CD8-positive, alpha-beta T cell (primary cell): ENCODE measurements at regions of chr7 and their contacts with region 1.

Region 1: DNA sequence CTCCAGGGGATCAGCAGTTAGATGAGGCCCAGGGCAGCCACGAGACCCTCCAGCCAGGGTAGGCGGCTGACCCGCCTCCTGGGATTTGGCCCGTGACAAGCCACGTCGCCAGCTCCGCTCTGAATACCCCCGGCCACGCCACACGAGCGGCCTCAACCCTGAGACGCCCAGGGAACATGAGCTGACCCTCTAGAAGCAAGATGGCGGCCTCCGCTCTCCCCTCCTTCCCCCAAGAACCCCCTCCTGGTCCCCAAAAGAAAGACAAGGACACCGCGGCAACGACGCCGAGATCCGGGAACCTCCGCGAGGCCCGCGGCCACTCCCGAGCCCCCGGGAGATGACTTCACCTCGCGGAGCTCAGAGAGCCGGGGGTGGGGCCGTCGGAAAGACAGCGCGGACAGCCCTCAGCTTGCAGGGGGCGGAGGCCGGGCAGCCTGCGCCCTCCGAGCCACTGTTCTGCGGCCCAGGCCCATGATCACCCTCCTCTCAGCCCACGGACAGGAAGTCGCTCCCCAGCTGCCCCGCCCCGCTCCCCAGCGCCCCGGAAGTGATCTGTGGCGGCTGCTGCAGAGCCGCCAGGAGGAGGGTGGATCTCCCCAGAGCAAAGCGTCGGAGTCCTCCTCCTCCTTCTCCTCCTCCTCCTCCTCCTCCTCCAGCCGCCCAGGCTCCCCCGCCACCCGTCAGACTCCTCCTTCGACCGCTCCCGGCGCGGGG is at the start of gene RALA:
- DNase-seq: peak; percentile 75 to 93 (median 91)
- ATAC-seq: peak; percentile 86
- H3K4me3 ChIP-seq: peak within 1 kb of the TSS; percentile 77 to 85
- H3K4me3 Mint-ChIP-seq: peak within 1 kb of the TSS; percentile 97
- H3K27ac ChIP-seq: peak within 1 kb of the TSS; percentile 81 to 89
- H3K27ac Mint-ChIP-seq: peak within 1 kb of the TSS; percentile 98
- H3K4me1 ChIP-seq: peaks cover 38% of the 10 kb centered on the region
- H3K4me1 Mint-ChIP-seq: peaks cover 53% of the 10 kb centered on the region
- H3K27me3 ChIP-seq: no peaks in the 10 kb centered on the region
- H3K27me3 Mint-ChIP-seq: no peaks in the 10 kb centered on the region
- CTCF ChIP-seq: no peak
- total RNA-seq, gene RALA: 35.5 to 37.5 TPM

Region 2: GRCh38 chr7:39525926-39526325 is 97.2 kb before region 1 on chr7:
- CTCF ChIA-PET with region 1: no interaction called
- POLR2A ChIA-PET with region 1: no interaction called
- intact Hi-C with region 1: no loop called
- DNase-seq: no peak
- ATAC-seq: no peak
- H3K4me3 ChIP-seq: no peak overlapping the region
- H3K4me3 Mint-ChIP-seq: no peak overlapping the region
- H3K27ac ChIP-seq: no peak overlapping the region
- H3K27ac Mint-ChIP-seq: no peak overlapping the region
- H3K4me1 ChIP-seq: no peaks in the 10 kb centered on the region
- H3K4me1 Mint-ChIP-seq: no peaks in the 10 kb centered on the region
- H3K27me3 ChIP-seq: peaks cover 0 to 1% of the 10 kb centered on the region in 2 experiments
- H3K27me3 Mint-ChIP-seq: peaks cover 14% of the 10 kb centered on the region
- CTCF ChIP-seq: no peak

Region 3: DNA sequence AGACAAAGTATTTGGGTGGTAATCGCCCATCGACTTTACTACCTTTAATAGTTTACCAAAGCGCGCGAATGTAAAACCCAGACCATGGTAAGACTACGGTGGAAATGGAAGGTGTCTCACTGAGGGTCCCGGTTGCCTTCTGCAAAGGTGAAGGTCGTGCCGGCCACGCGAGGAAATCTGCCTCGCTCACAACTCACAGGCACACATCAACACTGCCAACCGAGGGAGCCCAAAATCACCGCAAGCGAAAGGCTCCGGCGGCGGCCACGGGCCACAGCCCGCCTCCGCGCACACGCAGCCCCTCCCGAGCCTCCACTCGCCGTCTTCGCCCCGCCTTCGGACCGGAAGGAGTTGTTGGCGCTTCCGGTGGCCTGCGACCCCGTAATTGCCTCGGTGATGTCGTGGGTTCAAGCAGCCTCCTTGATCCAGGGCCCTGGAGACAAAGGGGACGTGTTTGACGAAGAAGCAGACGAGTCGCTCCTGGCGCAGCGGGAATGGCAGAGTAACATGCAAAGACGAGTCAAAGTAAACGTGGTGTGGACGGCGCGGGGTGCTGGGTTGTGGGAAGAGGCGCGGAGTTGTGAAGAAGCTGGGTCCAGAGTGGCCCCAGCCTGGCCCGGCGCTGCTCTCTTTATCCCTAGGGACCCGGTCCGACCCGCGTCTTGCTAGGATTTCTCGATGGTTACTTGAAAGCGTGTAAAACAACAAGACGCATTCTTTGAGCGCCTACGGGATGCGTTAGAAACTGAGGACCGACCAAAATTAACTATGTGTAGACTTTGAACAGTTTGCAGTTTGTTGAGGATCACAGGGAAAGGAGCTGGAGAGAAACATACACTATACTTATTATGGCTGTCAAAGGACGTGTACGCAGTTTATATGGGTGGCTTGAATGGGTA is 56.9 kb before region 1 on chr7 and contains the start of gene YAE1:
- CTCF ChIA-PET with region 1: no interaction called
- POLR2A ChIA-PET with region 1: interaction called, 6 read pairs
- intact Hi-C with region 1: loop called (anchors 1 to 2 kb)
- DNase-seq: peak; percentile 60 to 89 (median 81)
- ATAC-seq: peak; percentile 91
- H3K4me3 ChIP-seq: peak within 1 kb of the TSS; percentile 83 to 86
- H3K4me3 Mint-ChIP-seq: peak within 1 kb of the TSS; percentile 99
- H3K27ac ChIP-seq: peak within 1 kb of the TSS; percentile 79 to 80
- H3K27ac Mint-ChIP-seq: peak within 1 kb of the TSS; percentile 99
- H3K4me1 ChIP-seq: peaks cover 9% of the 10 kb centered on the region
- H3K4me1 Mint-ChIP-seq: peaks cover 35% of the 10 kb centered on the region
- H3K27me3 ChIP-seq: no peaks in the 10 kb centered on the region
- H3K27me3 Mint-ChIP-seq: no peaks in the 10 kb centered on the region
- CTCF ChIP-seq: no peak
- total RNA-seq, gene YAE1: 5.2 to 8.8 TPM

Region 4: GRCh38 chr7:39589323-39590111 is 33.7 kb before region 1 on chr7:
- CTCF ChIA-PET with region 1: no interaction called
- POLR2A ChIA-PET with region 1: interaction called, 6 read pairs
- intact Hi-C with region 1: loop called (anchors 2 kb)
- DNase-seq: peak in 8 of 9 experiments; percentile 34 to 85 (median 58)
- ATAC-seq: peak; percentile 77
- H3K4me3 ChIP-seq: no peak overlapping the region
- H3K4me3 Mint-ChIP-seq: no peak overlapping the region
- H3K27ac ChIP-seq: no peak overlapping the region
- H3K27ac Mint-ChIP-seq: peak overlapping the region; percentile 49
- H3K4me1 ChIP-seq: peaks cover 10% of the 10 kb centered on the region
- H3K4me1 Mint-ChIP-seq: peaks cover 22% of the 10 kb centered on the region
- H3K27me3 ChIP-seq: no peaks in the 10 kb centered on the region
- H3K27me3 Mint-ChIP-seq: no peaks in the 10 kb centered on the region
- CTCF ChIP-seq: no peak

Region 5: DNA sequence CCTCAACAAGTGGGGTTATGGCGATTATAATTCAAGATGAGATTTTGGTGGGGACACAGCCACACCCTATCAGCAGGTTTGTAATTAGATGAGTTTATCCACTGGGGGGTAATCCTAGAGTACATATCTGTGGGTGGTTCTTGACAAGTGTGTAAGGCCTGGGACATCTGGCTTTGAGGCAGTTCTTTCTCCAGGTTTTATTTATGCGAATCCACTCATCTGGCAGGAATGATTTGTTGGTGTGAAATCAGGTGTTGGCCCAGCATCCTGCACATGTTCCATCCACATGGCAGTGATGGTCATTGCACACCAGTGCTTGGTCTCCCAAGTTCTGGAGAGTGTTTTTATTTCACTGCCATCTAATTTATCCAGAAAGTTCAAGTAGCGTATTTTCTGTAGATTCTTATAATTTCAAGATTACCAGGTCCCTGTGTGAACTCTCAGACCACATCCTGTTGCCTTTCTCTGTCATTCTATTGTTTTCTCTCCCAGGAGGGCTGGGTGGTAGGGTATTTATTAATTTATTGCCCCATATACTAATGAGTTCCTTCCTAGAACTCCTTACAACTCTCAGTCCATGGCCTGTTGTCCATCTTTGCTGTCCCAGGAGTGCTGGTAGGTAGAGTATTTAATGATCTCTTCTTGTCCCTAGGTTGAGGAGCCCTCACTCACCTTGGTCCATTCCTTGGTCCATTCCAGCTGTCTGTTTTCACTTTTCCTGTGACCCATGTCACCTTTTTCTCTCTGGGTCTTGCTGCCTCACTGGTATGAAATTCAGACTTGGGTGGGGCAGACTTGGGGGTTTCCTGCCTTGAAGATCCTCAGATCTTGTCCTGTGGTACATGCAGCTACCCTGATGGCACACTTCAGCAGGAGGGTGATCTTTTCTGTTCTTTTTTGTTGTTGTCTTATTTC is 10.6 kb after region 1 on chr7:
- CTCF ChIA-PET with region 1: interaction called, 3 read pairs
- POLR2A ChIA-PET with region 1: interaction called, 9 read pairs
- intact Hi-C with region 1: loop called in 1 of 2 experiments (anchors 1 kb)
- DNase-seq: peak; percentile 16 to 84 (median 47)
- ATAC-seq: peak; percentile 90
- H3K4me3 ChIP-seq: peak overlapping the region; percentile 3 to 24
- H3K4me3 Mint-ChIP-seq: peak overlapping the region; percentile 76
- H3K27ac ChIP-seq: peak overlapping the region; percentile 80
- H3K27ac Mint-ChIP-seq: peak overlapping the region; percentile 99
- H3K4me1 ChIP-seq: peaks cover 60% of the 10 kb centered on the region
- H3K4me1 Mint-ChIP-seq: peaks cover 82% of the 10 kb centered on the region
- H3K27me3 ChIP-seq: no peaks in the 10 kb centered on the region
- H3K27me3 Mint-ChIP-seq: no peaks in the 10 kb centered on the region
- CTCF ChIP-seq: no peak

Region 6: DNA sequence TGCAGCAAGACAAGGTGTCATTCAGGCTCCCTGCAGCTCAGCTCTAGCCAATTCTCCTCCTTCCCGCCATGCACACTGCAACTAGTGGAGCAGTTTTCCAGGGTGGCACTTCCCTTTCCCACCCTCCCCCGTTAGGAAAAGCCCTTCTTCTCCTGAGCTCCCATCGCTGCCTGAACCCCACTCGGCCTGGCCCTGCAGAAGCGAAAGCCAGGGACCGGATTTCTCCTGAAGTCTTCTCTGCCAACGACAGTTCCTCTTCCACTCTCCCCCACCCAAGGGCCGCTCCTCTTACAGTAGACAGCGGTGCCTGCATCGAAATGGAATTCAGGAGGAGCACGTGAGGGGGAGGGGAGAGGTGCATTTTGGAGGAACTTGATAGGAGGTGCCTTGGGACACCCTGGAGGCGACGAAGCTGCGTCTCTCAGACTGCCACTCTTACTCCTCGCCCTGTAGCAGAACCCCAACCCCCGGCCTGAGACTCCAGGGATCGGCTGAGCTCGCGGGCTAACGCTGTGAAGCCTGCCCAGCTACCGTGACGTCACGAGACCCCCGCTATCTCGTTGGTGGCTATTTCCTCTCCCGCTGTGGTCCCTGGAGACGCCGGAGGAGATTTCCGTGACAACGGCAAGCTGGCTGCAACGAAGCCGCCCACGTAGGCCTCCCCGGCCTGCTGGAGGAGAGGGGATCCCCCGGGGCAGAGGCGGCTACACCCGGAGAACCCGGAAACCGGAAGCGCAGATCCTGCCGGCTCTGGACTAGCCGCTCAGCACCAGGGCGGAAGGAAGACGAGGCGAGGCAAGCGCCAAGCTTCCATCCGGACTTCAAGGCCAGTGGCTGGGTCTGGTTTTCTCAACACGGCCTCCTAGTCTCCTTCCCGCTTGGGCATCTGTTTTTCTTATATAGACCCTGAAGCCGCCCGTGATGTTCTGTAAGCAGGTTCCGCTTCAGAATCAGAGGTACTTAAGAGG is 109.9 kb after region 1 on chr7:
- CTCF ChIA-PET with region 1: interaction called, 4 read pairs
- POLR2A ChIA-PET with region 1: interaction called, 31 read pairs
- intact Hi-C with region 1: loop called (anchors 1 to 2 kb)
- DNase-seq: peak; percentile 84 to 98 (median 95)
- ATAC-seq: peak; percentile 92
- H3K4me3 ChIP-seq: peak overlapping the region; percentile 79 to 85
- H3K4me3 Mint-ChIP-seq: peak overlapping the region; percentile 91
- H3K27ac ChIP-seq: peak overlapping the region; percentile 66 to 91
- H3K27ac Mint-ChIP-seq: peak overlapping the region; percentile 94
- H3K4me1 ChIP-seq: peaks cover 26% of the 10 kb centered on the region
- H3K4me1 Mint-ChIP-seq: peaks cover 40% of the 10 kb centered on the region
- H3K27me3 ChIP-seq: no peaks in the 10 kb centered on the region
- H3K27me3 Mint-ChIP-seq: no peaks in the 10 kb centered on the region
- CTCF ChIP-seq: no peak

Region 7: GRCh38 chr7:39948956-39949928 is 326.1 kb after region 1 on chr7:
- CTCF ChIA-PET with region 1: no interaction called
- POLR2A ChIA-PET with region 1: interaction called, 3 read pairs
- intact Hi-C with region 1: loop called (anchors 1 to 2 kb)
- DNase-seq: peak; percentile 95 to 100 (median 99)
- ATAC-seq: peak; percentile 74
- H3K4me3 ChIP-seq: peak overlapping the region; percentile 83 to 93
- H3K4me3 Mint-ChIP-seq: peak overlapping the region; percentile 97
- H3K27ac ChIP-seq: peak overlapping the region; percentile 88 to 95
- H3K27ac Mint-ChIP-seq: peak overlapping the region; percentile 99
- H3K4me1 ChIP-seq: peaks cover 27% of the 10 kb centered on the region
- H3K4me1 Mint-ChIP-seq: peaks cover 42% of the 10 kb centered on the region
- H3K27me3 ChIP-seq: no peaks in the 10 kb centered on the region
- H3K27me3 Mint-ChIP-seq: no peaks in the 10 kb centered on the region
- CTCF ChIP-seq: no peak